Activated T-helper 2 cell treated with anti-CD3 and anti-CD28 coated beads, Interferon-gamma antibody, Interleukin-2, Interleukin-4, amounts not matched to agents 10 μg/mL and 5 μg/mL and 100 μg/mL, durations not matched to agents 14 hours and 24 hours and 36 hours (primary cell): ENCODE measurements at regions of chr2 and their contacts with region 1.

Region 1: DNA sequence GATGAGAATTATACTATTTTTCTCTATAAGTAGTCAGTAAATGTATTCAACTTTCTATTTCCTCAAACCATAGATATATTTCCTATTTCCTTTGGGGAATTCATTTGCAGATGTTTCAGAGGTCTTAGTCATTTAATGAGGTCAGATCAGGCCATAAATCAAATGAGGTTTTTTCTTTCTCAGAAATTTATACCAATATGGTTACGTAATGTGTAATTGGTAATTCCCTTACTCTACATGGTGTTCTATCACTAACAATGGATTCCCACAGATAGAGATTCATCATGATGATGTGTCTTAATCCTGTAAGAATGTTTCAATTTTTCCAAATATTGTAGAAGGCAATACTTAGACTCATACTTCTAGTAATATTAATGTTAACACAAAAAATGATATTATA is 108.0 kb downstream of the DPP4 start:
- DNase-seq: no peak
- H3K4me3 Mint-ChIP-seq: no peak overlapping the region
- H3K27ac Mint-ChIP-seq: no peak overlapping the region
- H3K4me1 Mint-ChIP-seq: peaks cover 51% of the 10 kb centered on the region
- H3K27me3 Mint-ChIP-seq: no peaks in the 10 kb centered on the region

Region 2: DNA sequence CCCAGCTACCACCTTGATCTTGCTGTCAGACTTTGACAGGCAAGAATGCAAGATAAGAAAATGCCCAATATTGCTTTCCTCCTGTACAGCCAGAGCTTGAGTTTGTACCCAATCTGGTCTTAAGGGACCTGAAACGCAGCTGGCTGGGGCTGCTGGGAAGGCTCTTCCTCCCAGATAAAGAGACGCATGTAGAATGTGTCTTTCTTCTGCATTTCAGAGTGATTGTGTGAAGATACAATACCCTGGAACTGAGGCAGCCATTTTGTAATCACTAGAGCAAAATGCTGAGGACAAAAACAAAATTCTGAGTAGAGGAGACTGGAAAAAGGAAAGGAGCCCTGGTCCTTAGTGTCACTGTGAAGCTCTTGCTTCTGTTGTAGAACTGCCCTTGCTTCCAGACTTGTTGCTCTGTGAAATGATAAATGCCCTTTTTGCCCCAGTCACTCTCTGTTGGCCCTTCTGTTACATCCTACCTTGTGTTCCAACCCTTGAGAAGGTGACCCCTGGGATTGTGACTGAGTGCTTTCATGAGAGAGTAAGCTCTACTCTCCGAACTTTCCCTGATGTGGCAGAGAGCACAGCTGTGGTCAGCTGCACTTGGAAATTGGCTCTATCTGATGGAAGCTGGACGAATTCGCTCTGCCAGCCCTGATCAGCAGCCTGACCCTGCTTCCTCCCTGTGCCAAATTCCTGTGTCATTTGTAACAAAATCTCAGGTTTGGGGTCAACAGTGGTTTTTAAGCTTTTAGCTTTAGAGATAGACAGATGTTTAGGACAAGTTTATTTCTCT is 1335.0 kb before region 1 on chr2:
- intact Hi-C with region 1: no loop called
- DNase-seq: no peak
- H3K4me3 Mint-ChIP-seq: no peak overlapping the region
- H3K27ac Mint-ChIP-seq: no peak overlapping the region
- H3K4me1 Mint-ChIP-seq: peaks cover 7% of the 10 kb centered on the region
- H3K27me3 Mint-ChIP-seq: peaks cover 6% of the 10 kb centered on the region

Region 3: DNA sequence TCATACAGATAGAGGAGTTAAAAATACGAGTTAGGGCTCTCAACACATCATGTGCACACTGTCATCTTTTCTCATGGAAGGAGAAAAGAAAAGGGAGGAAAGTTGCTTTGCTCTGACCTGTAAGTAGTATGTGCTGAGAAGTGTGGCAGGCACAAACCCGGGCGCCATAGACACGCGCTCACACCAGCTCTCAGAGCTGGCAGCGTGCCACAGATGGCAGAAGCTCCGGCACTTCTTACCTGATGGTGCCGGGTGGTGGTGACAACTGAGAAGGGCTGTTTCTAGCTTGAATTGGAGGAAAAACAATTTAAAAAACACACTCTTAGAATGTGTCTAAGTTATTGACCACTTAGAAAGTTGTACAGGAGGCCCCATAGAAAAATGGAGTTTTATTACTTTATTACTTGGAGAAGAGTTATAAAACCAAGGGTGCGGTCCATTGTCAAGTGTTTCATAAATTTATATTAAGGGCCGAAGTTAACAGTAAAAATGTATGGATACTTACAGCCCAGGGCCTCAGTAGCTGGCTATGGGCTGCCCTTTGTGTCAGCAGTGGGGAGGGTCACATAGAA is 15.8 kb after region 1 on chr2:
- intact Hi-C with region 1: loop called (anchors 1 kb)
- DNase-seq: no peak
- H3K4me3 Mint-ChIP-seq: no peak overlapping the region
- H3K27ac Mint-ChIP-seq: peak overlapping the region; percentile 71
- H3K4me1 Mint-ChIP-seq: peaks cover 53% of the 10 kb centered on the region
- H3K27me3 Mint-ChIP-seq: no peaks in the 10 kb centered on the region

Region 4: GRCh38 chr2:162007447-162008040 is 41.5 kb after region 1 on chr2:
- intact Hi-C with region 1: loop called (anchors 1 kb)
- DNase-seq: no peak
- H3K4me3 Mint-ChIP-seq: no peak overlapping the region
- H3K27ac Mint-ChIP-seq: no peak overlapping the region
- H3K4me1 Mint-ChIP-seq: peaks cover 58% of the 10 kb centered on the region
- H3K27me3 Mint-ChIP-seq: no peaks in the 10 kb centered on the region